CD4-positive, alpha-beta memory T cell (primary cell): ENCODE measurements at regions of chr15 and their contacts with region 1.

Region 1: GRCh38 chr15:70535071-70535954 is 228.0 kb downstream of the UACA start:
- DNase-seq: peak; percentile 66 to 77 (median 73)
- H3K4me3 ChIP-seq: peak overlapping the region; percentile 19 to 53
- H3K4me3 Mint-ChIP-seq: peak overlapping the region; percentile 84 to 95 (median 90)
- H3K27ac ChIP-seq: peak overlapping the region; percentile 23
- H3K27ac Mint-ChIP-seq: peak overlapping the region; percentile 86 to 95 (median 89)
- H3K4me1 ChIP-seq: peaks cover 65% of the 10 kb centered on the region
- H3K4me1 Mint-ChIP-seq: peaks cover 44 to 78% (median 61%) of the 10 kb centered on the region in 4 donors
- H3K27me3 ChIP-seq: no peaks in the 10 kb centered on the region
- H3K27me3 Mint-ChIP-seq: no peaks in the 10 kb centered on the region

Region 2: DNA sequence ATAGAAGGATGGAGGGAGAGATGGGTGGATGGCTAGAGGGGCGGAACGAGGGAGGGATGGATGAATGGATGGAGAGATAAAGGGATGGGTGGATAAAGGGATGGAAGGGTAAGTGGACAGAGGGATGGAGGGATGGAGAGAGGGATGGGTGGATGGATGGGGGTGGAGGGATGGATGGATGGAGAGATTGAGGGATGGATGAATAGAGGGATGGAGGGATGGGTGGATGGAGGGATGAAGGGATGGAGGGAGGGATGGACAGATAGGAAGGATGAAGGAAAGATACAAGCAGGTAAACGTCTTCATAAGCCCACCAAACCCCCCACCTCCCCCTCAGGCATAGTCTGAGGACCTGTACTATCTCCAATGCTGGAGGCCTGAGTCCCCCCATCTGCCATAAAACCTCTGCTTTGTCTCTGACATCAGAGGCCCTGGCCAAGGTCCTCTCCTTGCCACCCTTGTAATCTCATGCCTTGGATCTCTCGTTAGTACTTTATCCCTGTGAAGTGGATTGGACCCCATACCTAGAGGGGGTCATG is 85.1 kb before region 1 on chr15:
- CTCF ChIA-PET with region 1: no interaction called
- POLR2A ChIA-PET with region 1: no interaction called
- intact Hi-C with region 1: no loop called
- DNase-seq: no peak
- H3K4me3 ChIP-seq: no peak overlapping the region
- H3K4me3 Mint-ChIP-seq: no peak overlapping the region
- H3K27ac ChIP-seq: no peak overlapping the region
- H3K27ac Mint-ChIP-seq: peak overlapping the region in 1 of 7 donors; percentile 52
- H3K4me1 ChIP-seq: peaks cover 41% of the 10 kb centered on the region
- H3K4me1 Mint-ChIP-seq: peaks cover 20 to 54% (median 30%) of the 10 kb centered on the region in 4 donors
- H3K27me3 ChIP-seq: no peaks in the 10 kb centered on the region
- H3K27me3 Mint-ChIP-seq: peaks cover 3 to 11% of the 10 kb centered on the region in 2 donors

Region 3: GRCh38 chr15:70504299-70504951 is 30.9 kb before region 1 on chr15:
- CTCF ChIA-PET with region 1: interaction called, 6 read pairs
- POLR2A ChIA-PET with region 1: interaction called, 15 read pairs
- intact Hi-C with region 1: no loop called
- DNase-seq: no peak
- H3K4me3 ChIP-seq: peak overlapping the region in 1 of 2 donors; percentile 2
- H3K4me3 Mint-ChIP-seq: peak overlapping the region in 7 of 8 donors; percentile 54 to 76 (median 59)
- H3K27ac ChIP-seq: no peak overlapping the region
- H3K27ac Mint-ChIP-seq: peak overlapping the region in 1 of 7 donors; percentile 8
- H3K4me1 ChIP-seq: peaks cover 62% of the 10 kb centered on the region
- H3K4me1 Mint-ChIP-seq: peaks cover 36 to 68% (median 51%) of the 10 kb centered on the region in 4 donors
- H3K27me3 ChIP-seq: no peaks in the 10 kb centered on the region
- H3K27me3 Mint-ChIP-seq: no peaks in the 10 kb centered on the region

Region 4: DNA sequence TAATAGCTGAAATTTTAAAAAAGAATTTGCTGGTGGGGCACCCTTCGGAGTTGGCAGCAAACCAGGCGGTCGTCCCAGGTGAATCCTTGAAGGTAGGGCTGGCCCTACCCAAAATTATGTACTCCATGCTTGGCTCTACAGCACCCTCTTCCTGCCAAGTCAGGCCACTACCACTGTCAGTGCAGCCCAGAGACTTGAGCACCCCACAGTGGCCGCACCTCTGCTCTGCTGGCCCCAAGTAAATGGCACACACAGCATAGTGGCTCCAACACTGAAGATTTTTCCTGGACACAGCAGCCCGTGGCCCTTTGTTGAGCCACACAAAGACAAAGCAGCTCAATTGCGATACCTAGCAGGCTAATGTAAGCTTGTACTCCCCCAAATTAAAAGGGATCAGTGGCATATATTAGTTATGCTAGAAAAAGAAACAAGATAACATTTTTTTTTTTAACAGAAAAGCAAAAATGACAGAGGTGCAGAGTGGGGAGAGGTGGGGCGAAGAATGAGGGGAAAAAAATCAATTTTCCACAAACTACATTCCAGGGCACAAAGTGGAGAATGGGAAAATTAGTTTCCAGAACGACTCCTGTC is 22.4 kb before region 1 on chr15:
- CTCF ChIA-PET with region 1: interaction called, 22 read pairs
- POLR2A ChIA-PET with region 1: interaction called, 10 read pairs
- intact Hi-C with region 1: no loop called
- DNase-seq: peak; percentile 55 to 67 (median 59)
- H3K4me3 ChIP-seq: no peak overlapping the region
- H3K4me3 Mint-ChIP-seq: no peak overlapping the region
- H3K27ac ChIP-seq: no peak overlapping the region
- H3K27ac Mint-ChIP-seq: peak overlapping the region in 1 of 7 donors; percentile 43
- H3K4me1 ChIP-seq: peaks cover 20% of the 10 kb centered on the region
- H3K4me1 Mint-ChIP-seq: peaks cover 9 to 28% (median 18%) of the 10 kb centered on the region in 4 donors
- H3K27me3 ChIP-seq: no peaks in the 10 kb centered on the region
- H3K27me3 Mint-ChIP-seq: no peaks in the 10 kb centered on the region

Region 5: DNA sequence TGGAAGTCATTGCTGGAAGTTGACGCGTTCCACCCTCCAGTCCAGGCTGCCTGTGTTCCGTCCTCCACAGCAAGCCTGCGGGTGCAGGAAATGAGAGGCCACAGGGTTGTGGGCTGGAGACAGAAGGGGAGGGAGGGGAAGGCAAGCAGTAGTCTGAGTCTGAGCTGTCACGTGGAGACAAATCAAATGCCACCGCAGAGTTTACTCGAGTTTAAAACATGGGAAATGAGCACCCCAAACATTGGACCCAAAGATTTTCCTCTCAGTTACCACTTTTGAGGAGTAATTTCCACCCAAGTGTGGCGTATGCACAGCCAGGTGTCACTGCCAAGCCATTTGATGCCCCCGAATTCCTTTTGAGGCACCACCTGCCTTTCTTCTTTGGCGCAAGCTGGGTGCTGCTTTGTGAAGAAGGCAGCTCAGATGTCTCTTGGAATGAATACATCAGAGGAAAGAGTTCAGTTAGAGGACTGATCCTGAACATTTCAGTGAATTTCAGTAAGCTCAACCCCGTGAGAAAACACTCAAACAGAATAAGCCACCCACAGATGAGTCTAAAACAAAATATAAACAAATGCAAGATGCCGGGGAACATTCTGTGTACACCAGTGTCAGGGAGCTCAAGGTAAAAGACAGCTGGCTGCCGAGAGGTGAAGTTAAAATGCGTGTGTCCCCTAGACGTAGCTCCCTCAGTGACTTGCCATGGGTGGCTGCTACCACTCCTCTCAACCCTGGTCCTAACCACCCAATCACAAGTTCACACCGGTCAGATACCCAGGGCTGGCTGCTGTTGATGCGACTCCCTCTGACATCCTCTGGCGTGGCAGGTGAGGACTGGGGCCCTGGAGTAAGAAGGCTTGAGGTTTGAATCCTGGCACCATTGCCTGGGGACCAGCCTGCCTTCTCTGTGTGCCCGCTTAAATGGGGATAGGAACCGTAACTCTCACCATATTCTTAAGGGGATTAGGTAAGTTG is 24.2 kb after region 1 on chr15:
- CTCF ChIA-PET with region 1: interaction called, 9 read pairs
- POLR2A ChIA-PET with region 1: interaction called, 20 read pairs
- intact Hi-C with region 1: loop called (anchors 1 kb)
- DNase-seq: peak; percentile 72 to 87 (median 75)
- H3K4me3 ChIP-seq: peak overlapping the region; percentile 28 to 31
- H3K4me3 Mint-ChIP-seq: peak overlapping the region in 1 of 8 donors; percentile 6
- H3K27ac ChIP-seq: no peak overlapping the region
- H3K27ac Mint-ChIP-seq: peak overlapping the region in 4 of 7 donors; percentile 26 to 82 (median 32)
- H3K4me1 ChIP-seq: peaks cover 64% of the 10 kb centered on the region
- H3K4me1 Mint-ChIP-seq: peaks cover 0 to 13% (median 4%) of the 10 kb centered on the region in 4 donors
- H3K27me3 ChIP-seq: no peaks in the 10 kb centered on the region
- H3K27me3 Mint-ChIP-seq: no peaks in the 10 kb centered on the region

Region 6: DNA sequence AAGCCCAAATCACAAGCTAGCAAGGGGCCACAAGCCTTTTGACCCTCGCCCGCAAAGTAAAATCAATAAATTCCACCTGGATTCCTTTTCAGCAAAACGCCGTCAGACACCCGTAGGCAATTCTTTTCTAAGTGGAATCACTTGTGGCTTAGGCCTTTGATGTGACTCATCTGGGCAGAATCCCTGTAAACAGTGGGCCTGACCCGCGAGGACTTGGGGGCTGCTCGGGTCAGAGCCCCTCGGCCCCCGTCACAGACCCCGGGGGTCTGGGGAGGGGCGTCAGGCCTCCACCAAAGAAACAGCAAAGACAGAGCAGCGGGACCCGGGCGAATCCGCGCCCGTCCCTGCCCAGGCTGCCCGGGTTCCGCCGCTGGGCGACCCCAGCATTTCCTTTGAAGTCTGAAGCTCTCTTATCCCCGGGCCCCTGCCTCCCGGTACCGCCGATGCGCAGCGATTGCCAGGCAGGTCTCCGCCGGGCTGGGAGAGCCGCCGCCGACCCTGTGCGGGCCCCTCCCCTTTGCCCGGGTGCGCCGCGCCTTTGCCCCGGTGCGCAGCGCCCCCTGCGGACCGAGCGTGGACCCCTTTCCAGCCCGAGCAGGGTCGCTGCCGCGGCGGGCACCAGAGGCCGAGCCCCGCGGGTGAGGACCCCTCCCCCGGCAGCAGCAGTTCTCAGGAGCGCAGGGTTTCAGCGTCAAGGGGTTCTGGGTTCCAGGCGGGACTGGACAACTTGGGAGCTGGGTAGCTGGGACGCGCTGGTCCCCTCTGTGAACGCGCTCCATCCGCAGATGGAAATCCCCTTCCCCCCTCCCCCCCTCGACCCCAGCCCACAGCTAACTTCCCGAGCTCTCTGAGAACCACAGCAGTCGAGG is 49.8 kb after region 1 on chr15:
- CTCF ChIA-PET with region 1: interaction called, 10 read pairs
- POLR2A ChIA-PET with region 1: no interaction called
- intact Hi-C with region 1: no loop called
- DNase-seq: peak in 4 of 5 donors; percentile 14 to 31 (median 26)
- H3K4me3 ChIP-seq: no peak overlapping the region
- H3K4me3 Mint-ChIP-seq: peak overlapping the region in 5 of 8 donors; percentile 36 to 66 (median 63)
- H3K27ac ChIP-seq: no peak overlapping the region
- H3K27ac Mint-ChIP-seq: peak overlapping the region in 1 of 7 donors; percentile 53
- H3K4me1 ChIP-seq: peaks cover 12% of the 10 kb centered on the region
- H3K4me1 Mint-ChIP-seq: peaks cover 5 to 13% (median 10%) of the 10 kb centered on the region in 4 donors
- H3K27me3 ChIP-seq: peaks cover 8% of the 10 kb centered on the region
- H3K27me3 Mint-ChIP-seq: peaks cover 18 to 29% of the 10 kb centered on the region in 2 donors

Region 7: GRCh38 chr15:70636540-70637165 is 101.3 kb after region 1 on chr15:
- CTCF ChIA-PET with region 1: no interaction called
- POLR2A ChIA-PET with region 1: no interaction called
- intact Hi-C with region 1: no loop called
- DNase-seq: no peak
- H3K4me3 ChIP-seq: no peak overlapping the region
- H3K4me3 Mint-ChIP-seq: no peak overlapping the region
- H3K27ac ChIP-seq: no peak overlapping the region
- H3K27ac Mint-ChIP-seq: no peak overlapping the region
- H3K4me1 ChIP-seq: no peaks in the 10 kb centered on the region
- H3K4me1 Mint-ChIP-seq: peaks cover 0 to 6% (median 2%) of the 10 kb centered on the region in 4 donors
- H3K27me3 ChIP-seq: no peaks in the 10 kb centered on the region
- H3K27me3 Mint-ChIP-seq: peaks cover 11 to 19% of the 10 kb centered on the region in 2 donors